A549 (cell line): ENCODE measurements at regions of chr5 and their contacts with region 1.

Region 1: GRCh38 chr5:141940695-141941271 is 17.1 kb downstream of the DELE1 start:
- DNase-seq: peak in 1 of 2 experiments; percentile 23
- ATAC-seq: peak; percentile 75 to 79
- H3K4me3 ChIP-seq: no peak overlapping the region
- H3K27ac ChIP-seq: peak overlapping the region in 1 of 2 experiments; percentile 29; a peak in 1 of 6 replicates
- H3K4me1 ChIP-seq: peaks cover 9% of the 10 kb centered on the region; the same call in 2 of the 3 replicates
- CTCF ChIP-seq: no peak
- EP300 ChIP-seq: no peak
- POLR2A ChIP-seq: no peak
- RAD21 ChIP-seq: no peak

Region 2: DNA sequence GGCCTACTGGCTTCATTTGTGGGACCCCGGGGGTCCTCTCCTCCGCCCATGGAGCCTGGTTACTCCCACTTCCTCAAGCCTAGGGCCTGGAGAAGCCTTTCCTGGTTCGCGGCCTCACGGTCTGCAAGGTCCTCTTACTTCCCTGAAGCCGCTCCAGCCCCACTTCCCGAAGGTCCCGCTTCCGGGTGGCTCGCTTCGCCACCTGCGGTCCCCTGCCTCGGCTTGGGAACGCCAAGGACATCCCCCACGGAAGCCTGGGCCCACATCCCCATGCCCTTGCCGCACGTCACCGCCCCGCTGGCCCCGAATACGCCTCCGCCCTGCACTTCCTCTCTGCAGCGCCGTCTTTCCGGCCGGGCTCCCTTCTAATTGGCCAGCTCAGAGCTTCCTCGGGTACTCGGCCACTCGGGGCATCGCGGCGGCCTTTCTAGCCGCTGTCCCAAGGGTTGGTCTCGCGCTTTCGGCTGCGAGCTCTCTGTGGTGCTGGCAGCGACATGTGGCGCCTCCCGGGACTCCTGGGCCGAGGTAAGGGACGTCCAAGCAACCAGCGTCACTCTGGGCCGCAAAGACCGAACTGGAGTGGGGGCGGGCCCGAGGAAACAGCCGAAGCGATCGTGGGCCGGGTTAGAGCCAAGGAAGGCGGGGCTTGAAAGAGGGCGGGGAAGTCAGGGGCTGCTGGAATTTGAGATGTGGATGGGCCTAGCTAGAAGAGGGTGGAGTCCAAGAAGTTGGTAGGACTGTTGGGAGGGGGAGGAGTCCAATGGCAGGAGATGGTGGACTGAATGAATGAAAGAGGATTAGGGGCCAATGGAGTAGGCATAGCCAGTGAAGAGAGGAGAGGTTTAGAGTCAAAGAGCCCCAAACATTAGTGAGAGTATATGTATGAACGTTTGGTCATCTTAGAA is 17.1 kb before region 1 on chr5 and contains the start of gene DELE1:
- CTCF ChIA-PET with region 1: interaction called, 4 read pairs
- POLR2A ChIA-PET with region 1: interaction called, 28 read pairs
- DNase-seq: peak; percentile 95 to 96
- ATAC-seq: peak; percentile 98 to 99
- H3K4me3 ChIP-seq: peak within 1 kb of the TSS; percentile 89
- H3K27ac ChIP-seq: peak within 1 kb of the TSS; percentile 92 to 99
- H3K4me1 ChIP-seq: peaks cover 12% of the 10 kb centered on the region
- CTCF ChIP-seq: no peak
- EP300 ChIP-seq: no peak
- POLR2A ChIP-seq: peak; percentile 80
- RAD21 ChIP-seq: no peak
- polyA plus RNA-seq, gene DELE1: 60.1 and 72.2 TPM in 2 replicates